Activated T-helper 2 cell treated with anti-CD3 and anti-CD28 coated beads, Interferon-gamma antibody, Interleukin-2, Interleukin-4, amounts not matched to agents 10 μg/mL and 5 μg/mL and 100 μg/mL, durations not matched to agents 14 hours and 24 hours and 36 hours (primary cell): ENCODE measurements at regions of chr6 and their contacts with region 1.

Region 1: DNA sequence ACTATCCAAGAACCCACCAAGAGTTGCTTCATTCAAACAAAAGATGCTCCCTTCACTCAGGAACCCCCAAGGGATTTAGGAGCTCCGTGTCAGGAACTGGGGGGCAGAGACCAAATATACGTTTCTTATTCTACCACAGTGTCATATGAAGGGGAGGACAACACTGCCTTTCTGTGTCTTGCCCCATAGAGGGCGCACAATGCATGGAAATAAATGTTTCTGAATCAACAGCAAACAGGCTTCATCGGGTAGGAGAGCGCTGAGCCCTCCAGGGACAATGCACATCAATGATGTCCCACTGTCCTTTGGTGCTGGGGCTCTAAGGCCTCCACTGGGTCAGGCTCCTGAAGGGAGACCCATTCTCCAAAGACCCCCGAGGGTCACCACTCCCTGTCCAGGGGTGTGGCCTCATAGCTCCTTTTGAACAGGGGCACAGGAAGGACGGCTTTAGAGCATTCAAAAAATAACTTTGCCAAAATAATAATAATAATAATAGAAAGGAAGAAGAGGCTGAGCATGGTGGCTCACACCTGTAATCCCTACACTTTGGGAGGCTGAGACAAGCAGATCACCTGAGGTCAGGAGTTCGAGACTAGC is 31.1 kb downstream of the PLG start:
- DNase-seq: no peak
- H3K4me3 Mint-ChIP-seq: no peak overlapping the region
- H3K27ac Mint-ChIP-seq: no peak overlapping the region
- H3K4me1 Mint-ChIP-seq: no peaks in the 10 kb centered on the region
- H3K27me3 Mint-ChIP-seq: peaks cover 2% of the 10 kb centered on the region

Region 2: GRCh38 chr6:160178271-160178670 is 554.9 kb before region 1 on chr6:
- intact Hi-C with region 1: no loop called
- DNase-seq: no peak
- H3K4me3 Mint-ChIP-seq: no peak overlapping the region
- H3K27ac Mint-ChIP-seq: no peak overlapping the region
- H3K4me1 Mint-ChIP-seq: no peaks in the 10 kb centered on the region
- H3K27me3 Mint-ChIP-seq: peaks cover 7% of the 10 kb centered on the region

Region 3: DNA sequence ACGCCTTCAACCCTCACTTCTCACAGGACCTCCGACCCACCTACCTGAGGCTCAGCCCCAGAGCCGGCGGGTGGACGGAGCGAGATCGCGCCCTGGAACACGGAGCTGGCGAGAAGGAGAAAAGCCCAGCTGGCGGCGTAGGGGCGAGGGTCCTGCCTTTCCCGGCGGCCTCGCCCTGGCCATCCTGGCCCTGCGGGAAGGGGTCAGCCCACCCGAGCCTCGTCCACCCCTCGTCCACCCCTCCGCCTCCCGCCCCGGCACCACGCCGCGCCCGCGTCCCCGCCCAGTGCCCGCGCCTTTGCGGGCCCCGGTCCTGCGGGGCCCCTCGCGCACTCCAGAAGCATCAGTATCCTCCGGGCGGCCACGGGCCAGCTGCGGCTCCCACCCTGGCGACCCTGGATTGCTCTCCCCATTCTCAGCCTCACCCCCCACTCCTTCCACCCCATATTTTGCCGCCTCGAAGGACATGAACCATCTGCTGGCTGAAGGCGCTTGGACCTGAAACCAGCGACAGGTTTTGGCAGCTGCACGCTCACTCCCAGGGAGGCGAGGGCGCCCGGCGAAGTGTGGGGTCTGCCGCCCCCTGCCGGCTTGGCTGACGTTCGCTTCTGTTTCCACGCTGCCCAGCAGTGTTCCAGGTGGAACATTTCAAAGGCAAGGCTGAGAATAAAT is 34.0 kb after region 1 on chr6:
- intact Hi-C with region 1: loop called (anchors 2 kb)
- DNase-seq: peak; percentile 32
- H3K4me3 Mint-ChIP-seq: peak overlapping the region; percentile 70
- H3K27ac Mint-ChIP-seq: no peak overlapping the region
- H3K4me1 Mint-ChIP-seq: peaks cover 2% of the 10 kb centered on the region
- H3K27me3 Mint-ChIP-seq: peaks cover 22% of the 10 kb centered on the region

Region 4: DNA sequence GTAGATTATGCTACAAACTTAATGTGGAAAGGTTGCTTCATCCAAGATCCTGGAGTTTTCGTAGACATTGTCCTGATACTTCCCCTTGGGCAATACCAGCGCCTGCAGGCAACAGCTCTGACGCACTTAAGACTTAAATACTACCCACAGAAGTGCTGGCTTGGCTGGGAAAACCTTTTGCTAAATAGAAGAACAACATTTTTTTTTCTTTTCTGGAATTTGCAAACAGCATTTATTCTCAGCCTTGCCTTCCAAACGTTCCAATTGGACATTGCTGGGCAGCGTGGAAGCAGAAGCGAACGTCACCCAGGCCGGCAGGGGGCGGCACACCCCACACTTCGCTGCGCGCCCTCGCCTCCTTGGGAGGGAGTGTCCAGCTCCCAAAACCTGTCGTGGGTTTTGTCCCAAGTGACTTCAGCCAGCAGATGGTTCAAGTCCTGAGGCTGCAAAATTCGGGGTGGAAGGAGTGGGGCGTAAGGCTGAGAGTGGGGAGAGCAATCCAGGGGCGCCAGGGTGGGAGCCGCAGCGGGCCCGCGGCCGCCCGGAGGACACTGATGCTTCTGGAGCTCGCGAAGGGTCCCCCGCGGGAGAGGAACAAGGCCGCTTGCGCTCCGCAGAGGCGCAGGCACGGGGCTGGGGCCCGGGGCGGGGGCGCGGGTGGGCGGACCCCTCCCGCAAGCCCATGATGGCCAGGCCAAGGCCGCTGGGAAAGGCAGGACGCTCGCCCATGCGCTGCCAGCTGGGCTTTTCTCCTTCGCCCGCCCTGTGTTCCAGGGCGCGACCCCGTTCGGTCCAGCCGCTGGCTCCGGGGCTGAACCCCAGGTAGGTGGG is 197.6 kb after region 1 on chr6:
- intact Hi-C with region 1: loop called (anchors 10 kb)
- DNase-seq: peak; percentile 32
- H3K4me3 Mint-ChIP-seq: peak overlapping the region; percentile 18
- H3K27ac Mint-ChIP-seq: no peak overlapping the region
- H3K4me1 Mint-ChIP-seq: no peaks in the 10 kb centered on the region
- H3K27me3 Mint-ChIP-seq: peaks cover 25% of the 10 kb centered on the region